ENCODE measurements at regions of chr19 and their contacts with region 1.

Region 1: GRCh38 chr19:52397310-52398080 is at the start of gene ZNF528:
- DNase-seq: peak; percentile 97
- H3K4me3 ChIP-seq: peak within 1 kb of the TSS; percentile 52 to 72 (median 66)
- H3K27ac ChIP-seq: peak within 1 kb of the TSS; percentile 63 to 81 (median 68)
- H3K4me1 ChIP-seq: peaks cover 0 to 19% (median 18%) of the 10 kb centered on the region in 4 donors
- H3K27me3 ChIP-seq: no peaks in the 10 kb centered on the region
- CTCF ChIP-seq: no peak
- EP300 ChIP-seq: peak in 1 of 4 donors; percentile 45
- POLR2A ChIP-seq: peak in 1 of 2 donors; percentile 38
- total RNA-seq, gene ZNF528: 15.5 to 27.4 (median 20.2) TPM

Region 2: GRCh38 chr19:52369559-52370340 is 27.7 kb before region 1 on chr19 and contains the start of gene ZNF880:
- intact Hi-C with region 1: loop called (anchors 1 kb)
- DNase-seq: peak; percentile 96
- H3K4me3 ChIP-seq: peak within 1 kb of the TSS; percentile 64 to 79 (median 71)
- H3K27ac ChIP-seq: peak within 1 kb of the TSS; percentile 90 to 95 (median 90)
- H3K4me1 ChIP-seq: peaks cover 0 to 8% (median 4%) of the 10 kb centered on the region in 4 donors
- H3K27me3 ChIP-seq: no peaks in the 10 kb centered on the region
- CTCF ChIP-seq: no peak
- EP300 ChIP-seq: no peak
- POLR2A ChIP-seq: peak in 1 of 2 donors; percentile 43
- total RNA-seq, gene ZNF880: 21.6 to 24.8 (median 23.0) TPM

Region 3: GRCh38 chr19:52554216-52554971 is 156.9 kb after region 1 on chr19:
- intact Hi-C with region 1: no loop called
- DNase-seq: no peak
- H3K4me3 ChIP-seq: no peak overlapping the region
- H3K27ac ChIP-seq: no peak overlapping the region
- H3K4me1 ChIP-seq: no peaks in the 10 kb centered on the region
- H3K27me3 ChIP-seq: no peaks in the 10 kb centered on the region
- CTCF ChIP-seq: no peak
- EP300 ChIP-seq: no peak
- POLR2A ChIP-seq: no peak

Measured in sigmoid colon (tissue), 7 donors.